GM12878 (cell line): ENCODE measurements at regions of chr12 and their contacts with region 1.

Region 1: GRCh38 chr12:106357549-106358395 is at the start of gene POLR3B:
- DNase-seq: peak; percentile 74
- ATAC-seq: peak; percentile 92
- H3K4me3 ChIP-seq: peak within 1 kb of the TSS; percentile 89
- H3K27ac ChIP-seq: peak within 1 kb of the TSS; percentile 79
- H3K4me1 ChIP-seq: no peaks in the 10 kb centered on the region
- H3K27me3 ChIP-seq: no peaks in the 10 kb centered on the region
- CTCF ChIP-seq: peak; percentile 85 to 95 (median 95); a peak in 5 of 6 replicates
- EP300 ChIP-seq: peak in 1 of 2 experiments; percentile 27; a peak in 1 of 4 replicates
- POLR2A ChIP-seq: peak; percentile 85
- RAD21 ChIP-seq: peak; percentile 68
- polyA plus RNA-seq, gene POLR3B: 2.3 to 4.3 TPM

Region 2: GRCh38 chr12:106223485-106224354 is 134.1 kb before region 1 on chr12:
- CTCF ChIA-PET with region 1: interaction called, 31 read pairs
- POLR2A ChIA-PET with region 1: no interaction called
- RAD21 ChIA-PET with region 1: interaction called, 15 read pairs
- SMC1A ChIA-PET with region 1: interaction called, 5 read pairs
- in situ Hi-C with region 1: no loop called
- intact Hi-C with region 1: loop called (anchors 5 kb)
- DNase-seq: no peak
- ATAC-seq: peak; percentile 94
- H3K4me3 ChIP-seq: no peak overlapping the region
- H3K27ac ChIP-seq: no peak overlapping the region
- H3K4me1 ChIP-seq: no peaks in the 10 kb centered on the region
- H3K27me3 ChIP-seq: no peaks in the 10 kb centered on the region
- CTCF ChIP-seq: peak; percentile 84 to 98 (median 95)
- EP300 ChIP-seq: no peak
- POLR2A ChIP-seq: no peak
- RAD21 ChIP-seq: peak; percentile 59

Region 3: GRCh38 chr12:106342397-106343213 is 15.2 kb before region 1 on chr12:
- CTCF ChIA-PET with region 1: interaction called, 14 read pairs
- POLR2A ChIA-PET with region 1: no interaction called
- RAD21 ChIA-PET with region 1: no interaction called
- SMC1A ChIA-PET with region 1: interaction called, 8 read pairs
- in situ Hi-C with region 1: no loop called
- intact Hi-C with region 1: no loop called
- DNase-seq: no peak
- ATAC-seq: no peak
- H3K4me3 ChIP-seq: no peak overlapping the region
- H3K27ac ChIP-seq: no peak overlapping the region
- H3K4me1 ChIP-seq: no peaks in the 10 kb centered on the region
- H3K27me3 ChIP-seq: no peaks in the 10 kb centered on the region
- CTCF ChIP-seq: no peak
- EP300 ChIP-seq: no peak
- POLR2A ChIP-seq: no peak
- RAD21 ChIP-seq: no peak

Region 4: GRCh38 chr12:106378788-106379187 is 21.0 kb after region 1 on chr12:
- CTCF ChIA-PET with region 1: interaction called, 15 read pairs
- POLR2A ChIA-PET with region 1: interaction called, 3 read pairs
- RAD21 ChIA-PET with region 1: no interaction called
- SMC1A ChIA-PET with region 1: interaction called, 3 read pairs
- in situ Hi-C with region 1: no loop called
- intact Hi-C with region 1: no loop called
- DNase-seq: no peak
- ATAC-seq: no peak
- H3K4me3 ChIP-seq: no peak overlapping the region
- H3K27ac ChIP-seq: no peak overlapping the region
- H3K4me1 ChIP-seq: no peaks in the 10 kb centered on the region
- H3K27me3 ChIP-seq: no peaks in the 10 kb centered on the region
- CTCF ChIP-seq: no peak
- EP300 ChIP-seq: no peak
- POLR2A ChIP-seq: no peak
- RAD21 ChIP-seq: no peak

Region 5: DNA sequence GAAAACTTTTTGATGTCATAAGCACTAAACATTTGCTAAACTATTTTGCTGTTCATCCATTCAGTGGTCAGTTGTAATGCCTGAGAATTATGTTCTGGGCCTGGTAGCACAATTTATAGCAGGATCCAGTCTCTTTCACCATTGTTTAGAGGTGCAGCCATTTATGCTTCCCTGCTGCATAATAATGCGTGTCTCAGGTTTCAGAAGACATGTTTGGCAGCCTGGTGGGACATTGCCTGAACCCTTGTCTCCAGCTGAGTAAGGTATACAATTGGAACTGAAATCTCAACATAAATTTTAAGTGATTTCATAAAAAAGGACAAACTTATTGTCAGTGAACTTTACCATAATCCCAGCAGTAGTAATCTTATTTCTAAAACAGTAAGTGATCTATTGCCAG is 94.5 kb after region 1 on chr12:
- CTCF ChIA-PET with region 1: no interaction called
- POLR2A ChIA-PET with region 1: no interaction called
- RAD21 ChIA-PET with region 1: no interaction called
- SMC1A ChIA-PET with region 1: no interaction called
- in situ Hi-C with region 1: no loop called
- intact Hi-C with region 1: no loop called
- DNase-seq: no peak
- ATAC-seq: no peak
- H3K4me3 ChIP-seq: no peak overlapping the region
- H3K27ac ChIP-seq: no peak overlapping the region
- H3K4me1 ChIP-seq: no peaks in the 10 kb centered on the region
- H3K27me3 ChIP-seq: no peaks in the 10 kb centered on the region
- CTCF ChIP-seq: no peak
- EP300 ChIP-seq: no peak
- POLR2A ChIP-seq: no peak
- RAD21 ChIP-seq: no peak

Region 6: DNA sequence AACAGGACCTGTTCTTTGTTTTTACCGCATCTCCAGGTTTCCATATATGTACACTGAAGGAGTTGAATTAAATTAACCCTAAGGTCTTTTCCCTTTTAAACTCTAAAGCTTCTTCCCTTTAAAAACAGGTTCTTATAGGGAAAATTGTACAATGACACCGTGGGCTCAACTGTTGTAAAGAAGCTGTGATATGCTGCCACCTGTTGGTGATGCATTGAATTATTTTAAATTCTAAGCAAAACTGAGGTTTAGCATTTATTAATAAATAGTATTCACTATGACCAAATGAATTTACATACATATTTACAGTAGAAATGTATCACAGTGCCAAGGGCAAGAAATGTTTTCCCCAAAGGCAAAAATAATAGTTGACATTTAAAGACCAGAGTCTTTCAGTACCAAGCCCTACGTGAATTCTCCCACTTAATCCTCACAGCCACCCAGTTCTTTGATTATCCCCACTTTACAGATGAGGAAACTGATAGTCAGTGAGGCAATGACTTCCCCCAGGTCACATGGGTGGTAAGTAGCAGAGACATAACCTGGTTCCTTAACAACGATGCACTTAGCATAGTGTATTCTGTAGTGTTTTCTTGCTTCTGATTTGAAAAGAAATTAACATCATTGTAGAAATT is 562.3 kb after region 1 on chr12:
- CTCF ChIA-PET with region 1: interaction called, 54 read pairs
- POLR2A ChIA-PET with region 1: no interaction called
- RAD21 ChIA-PET with region 1: interaction called, 19 read pairs
- SMC1A ChIA-PET with region 1: interaction called, 24 read pairs
- in situ Hi-C with region 1: no loop called
- intact Hi-C with region 1: loop called (anchors 1 kb)
- DNase-seq: no peak
- ATAC-seq: peak; percentile 55
- H3K4me3 ChIP-seq: no peak overlapping the region
- H3K27ac ChIP-seq: no peak overlapping the region
- H3K4me1 ChIP-seq: peaks cover 6% of the 10 kb centered on the region
- H3K27me3 ChIP-seq: no peaks in the 10 kb centered on the region; a peak in 1 of 4 replicates
- CTCF ChIP-seq: peak; percentile 55 to 73 (median 64)
- EP300 ChIP-seq: no peak
- POLR2A ChIP-seq: no peak
- RAD21 ChIP-seq: peak; percentile 87